Ascending aorta (tissue), 2 donors: ENCODE measurements at regions of chr18 and their contacts with region 1.

Region 1: DNA sequence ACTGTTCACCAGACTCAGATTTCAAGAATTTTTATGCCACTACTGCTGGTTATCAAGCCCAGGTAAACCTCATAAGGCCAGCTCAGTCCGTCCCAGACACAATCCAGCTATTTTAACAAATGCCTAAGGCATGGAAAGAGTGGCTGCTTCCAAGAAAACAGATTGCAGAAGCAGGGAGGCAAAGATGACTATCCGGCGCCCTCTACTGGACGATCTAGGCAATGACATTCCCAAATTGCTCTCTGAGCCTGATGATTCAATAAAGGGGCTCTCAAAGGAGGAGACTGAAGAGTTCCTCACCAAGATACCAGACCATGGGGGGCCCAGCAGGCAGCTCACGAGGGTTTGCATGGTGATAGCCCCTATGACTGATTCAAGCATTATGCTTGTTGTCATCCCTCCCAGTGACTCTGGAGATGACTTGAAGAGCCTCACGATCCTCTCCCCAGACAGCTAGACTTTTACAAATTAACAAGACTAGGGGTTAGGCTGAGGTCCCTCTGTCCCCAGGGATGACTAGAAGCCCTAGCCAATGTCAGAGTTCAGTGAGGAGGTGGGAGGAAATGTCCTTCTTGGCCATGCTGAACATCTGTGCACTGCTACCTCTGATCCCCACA is 25.0 kb downstream of the SERPINB8 start:
- DNase-seq: peak in 1 of 2 donors; percentile 69
- H3K4me3 ChIP-seq: no peak overlapping the region
- H3K27ac ChIP-seq: no peak overlapping the region
- H3K4me1 ChIP-seq: no peaks in the 10 kb centered on the region
- H3K27me3 ChIP-seq: no peaks in the 10 kb centered on the region
- CTCF ChIP-seq: peak; percentile 59 to 89 (median 87)

Region 2: GRCh38 chr18:63523660-63524059 is 471.2 kb before region 1 on chr18:
- intact Hi-C with region 1: loop called (anchors 5 kb)
- DNase-seq: no peak
- H3K4me3 ChIP-seq: no peak overlapping the region
- H3K27ac ChIP-seq: no peak overlapping the region
- H3K4me1 ChIP-seq: no peaks in the 10 kb centered on the region
- H3K27me3 ChIP-seq: no peaks in the 10 kb centered on the region
- CTCF ChIP-seq: no peak

Region 3: DNA sequence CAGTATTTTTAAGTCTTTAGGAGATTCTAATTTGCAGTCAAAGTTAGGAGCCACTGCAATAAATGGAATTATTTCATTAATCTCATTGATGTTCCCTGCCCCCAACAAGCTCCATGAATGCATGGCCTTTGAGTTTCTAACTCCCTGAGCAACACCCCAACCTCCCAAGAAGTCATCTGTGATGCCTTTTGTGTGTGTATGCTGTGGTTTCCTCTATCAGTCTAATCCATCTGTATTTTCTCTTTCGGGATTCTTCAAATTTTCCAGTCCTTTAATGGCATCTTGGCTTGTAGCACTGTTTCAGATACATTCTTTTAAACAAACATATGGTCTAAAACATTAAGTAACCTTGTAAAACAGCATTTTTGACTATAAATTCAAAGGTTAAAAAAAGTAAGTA is 70.3 kb before region 1 on chr18:
- intact Hi-C with region 1: no loop called
- DNase-seq: no peak
- H3K4me3 ChIP-seq: no peak overlapping the region
- H3K27ac ChIP-seq: no peak overlapping the region
- H3K4me1 ChIP-seq: no peaks in the 10 kb centered on the region
- H3K27me3 ChIP-seq: no peaks in the 10 kb centered on the region
- CTCF ChIP-seq: no peak

Region 4: DNA sequence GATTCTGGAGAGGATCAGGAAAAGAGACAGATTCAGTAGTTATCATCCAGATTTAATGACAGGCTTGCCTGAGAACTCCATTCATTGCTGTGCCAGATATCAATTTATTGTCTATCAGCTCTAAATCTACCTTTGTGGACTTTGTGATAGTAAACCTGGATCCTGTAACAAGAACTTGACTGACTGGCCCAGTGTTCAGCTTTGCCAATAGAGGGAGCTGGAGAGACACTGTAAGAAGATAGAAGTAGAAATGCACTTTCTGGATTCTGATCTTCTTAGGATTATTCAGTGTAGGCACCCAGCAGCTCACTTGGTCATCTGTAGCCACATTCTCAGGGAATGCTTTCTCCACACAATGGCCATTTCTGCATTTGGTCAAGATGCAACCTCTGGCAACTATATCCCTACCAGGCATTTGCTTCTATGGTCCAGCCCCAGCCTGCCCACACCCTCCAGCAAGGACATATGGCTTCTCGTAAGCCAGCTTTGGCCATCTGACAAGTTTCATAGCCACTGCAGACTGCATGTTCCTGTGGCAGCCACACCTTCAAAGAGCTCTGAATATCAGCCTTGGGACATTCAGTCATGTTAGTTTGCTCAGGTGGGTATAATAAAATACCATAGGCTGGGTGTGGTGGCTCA is 31.2 kb before region 1 on chr18:
- intact Hi-C with region 1: loop called (anchors 2 kb)
- DNase-seq: peak in 1 of 2 donors; percentile 69
- H3K4me3 ChIP-seq: no peak overlapping the region
- H3K27ac ChIP-seq: no peak overlapping the region
- H3K4me1 ChIP-seq: no peaks in the 10 kb centered on the region
- H3K27me3 ChIP-seq: no peaks in the 10 kb centered on the region
- CTCF ChIP-seq: peak; percentile 36 to 80 (median 79)

Region 5: GRCh38 chr18:63979409-63979920 is 15.4 kb before region 1 on chr18:
- intact Hi-C with region 1: loop called (anchors 2 kb)
- DNase-seq: peak in 1 of 2 donors; percentile 72
- H3K4me3 ChIP-seq: peak overlapping the region; percentile 23 to 43
- H3K27ac ChIP-seq: peak overlapping the region; percentile 8 to 22
- H3K4me1 ChIP-seq: no peaks in the 10 kb centered on the region
- H3K27me3 ChIP-seq: no peaks in the 10 kb centered on the region
- CTCF ChIP-seq: peak; percentile 53 to 87 (median 74)